Activated naive CD8-positive, alpha-beta T cell treated with anti-CD3 and anti-CD28 coated beads, Interleukin-2, amount 10 ng/mL, durations not matched to agents 7 days and 5 days (primary cell): ENCODE measurements at regions of chr14 and their contacts with region 1.

Region 1: GRCh38 chr14:99266181-99267178 is 5.5 kb downstream of the BCL11B start:
- DNase-seq: peak; percentile 90
- ATAC-seq: peak; percentile 20
- H3K4me3 Mint-ChIP-seq: peak overlapping the region; percentile 98
- H3K27ac Mint-ChIP-seq: peak overlapping the region; percentile 99
- H3K4me1 Mint-ChIP-seq: peaks cover 56% of the 10 kb centered on the region
- H3K27me3 Mint-ChIP-seq: no peaks in the 10 kb centered on the region

Region 2: GRCh38 chr14:98138666-98139065 is 1127.8 kb before region 1 on chr14:
- POLR2A ChIA-PET with region 1: interaction called, 66 read pairs
- DNase-seq: peak; percentile 59
- ATAC-seq: peak; percentile 55
- H3K4me3 Mint-ChIP-seq: peak overlapping the region; percentile 79
- H3K27ac Mint-ChIP-seq: peak overlapping the region; percentile 94
- H3K4me1 Mint-ChIP-seq: peaks cover 68% of the 10 kb centered on the region
- H3K27me3 Mint-ChIP-seq: no peaks in the 10 kb centered on the region

Region 3: GRCh38 chr14:98189062-98189461 is 1077.4 kb before region 1 on chr14:
- POLR2A ChIA-PET with region 1: interaction called, 13 read pairs
- DNase-seq: no peak
- ATAC-seq: peak; percentile 54
- H3K4me3 Mint-ChIP-seq: peak overlapping the region; percentile 75
- H3K27ac Mint-ChIP-seq: peak overlapping the region; percentile 97
- H3K4me1 Mint-ChIP-seq: peaks cover 88% of the 10 kb centered on the region
- H3K27me3 Mint-ChIP-seq: no peaks in the 10 kb centered on the region

Region 4: GRCh38 chr14:99185436-99186068 is 80.9 kb before region 1 on chr14:
- POLR2A ChIA-PET with region 1: interaction called, 36 read pairs
- DNase-seq: peak; percentile 43
- ATAC-seq: no peak
- H3K4me3 Mint-ChIP-seq: peak overlapping the region; percentile 72
- H3K27ac Mint-ChIP-seq: peak overlapping the region; percentile 95
- H3K4me1 Mint-ChIP-seq: peaks cover 93% of the 10 kb centered on the region
- H3K27me3 Mint-ChIP-seq: no peaks in the 10 kb centered on the region

Region 5: GRCh38 chr14:99192028-99192621 is 74.4 kb before region 1 on chr14:
- POLR2A ChIA-PET with region 1: interaction called, 36 read pairs
- DNase-seq: no peak
- ATAC-seq: peak; percentile 16
- H3K4me3 Mint-ChIP-seq: peak overlapping the region; percentile 88
- H3K27ac Mint-ChIP-seq: peak overlapping the region; percentile 95
- H3K4me1 Mint-ChIP-seq: peaks cover 86% of the 10 kb centered on the region
- H3K27me3 Mint-ChIP-seq: no peaks in the 10 kb centered on the region

Region 6: GRCh38 chr14:99252940-99253868 is 13.3 kb before region 1 on chr14:
- POLR2A ChIA-PET with region 1: interaction called, 796 read pairs
- DNase-seq: peak; percentile 54
- ATAC-seq: peak; percentile 34
- H3K4me3 Mint-ChIP-seq: peak overlapping the region; percentile 79
- H3K27ac Mint-ChIP-seq: peak overlapping the region; percentile 95
- H3K4me1 Mint-ChIP-seq: peaks cover 84% of the 10 kb centered on the region
- H3K27me3 Mint-ChIP-seq: no peaks in the 10 kb centered on the region

Region 7: GRCh38 chr14:99287269-99287942 is 20.9 kb after region 1 on chr14:
- POLR2A ChIA-PET with region 1: no interaction called
- DNase-seq: no peak
- ATAC-seq: peak; percentile 52
- H3K4me3 Mint-ChIP-seq: peak overlapping the region; percentile 57
- H3K27ac Mint-ChIP-seq: peak overlapping the region; percentile 63
- H3K4me1 Mint-ChIP-seq: peaks cover 11% of the 10 kb centered on the region
- H3K27me3 Mint-ChIP-seq: peaks cover 6% of the 10 kb centered on the region

Region 8: GRCh38 chr14:99327063-99327843 is 60.8 kb after region 1 on chr14:
- POLR2A ChIA-PET with region 1: no interaction called
- DNase-seq: no peak
- ATAC-seq: no peak
- H3K4me3 Mint-ChIP-seq: no peak overlapping the region
- H3K27ac Mint-ChIP-seq: no peak overlapping the region
- H3K4me1 Mint-ChIP-seq: no peaks in the 10 kb centered on the region
- H3K27me3 Mint-ChIP-seq: peaks cover 2% of the 10 kb centered on the region